Colonic mucosa (tissue), 4 donors: ENCODE measurements at regions of chr17 and their contacts with region 1.

Region 1: GRCh38 chr17:82030470-82031302 is 792 bp upstream of the RAC3 start:
- DNase-seq: peak; percentile 90
- H3K4me3 ChIP-seq: peak overlapping the region; percentile 47
- H3K27ac ChIP-seq: peak overlapping the region; percentile 75
- H3K4me1 ChIP-seq: peaks cover 10% of the 10 kb centered on the region
- H3K27me3 ChIP-seq: no peaks in the 10 kb centered on the region
- CTCF ChIP-seq: peak; percentile 96

Region 2: DNA sequence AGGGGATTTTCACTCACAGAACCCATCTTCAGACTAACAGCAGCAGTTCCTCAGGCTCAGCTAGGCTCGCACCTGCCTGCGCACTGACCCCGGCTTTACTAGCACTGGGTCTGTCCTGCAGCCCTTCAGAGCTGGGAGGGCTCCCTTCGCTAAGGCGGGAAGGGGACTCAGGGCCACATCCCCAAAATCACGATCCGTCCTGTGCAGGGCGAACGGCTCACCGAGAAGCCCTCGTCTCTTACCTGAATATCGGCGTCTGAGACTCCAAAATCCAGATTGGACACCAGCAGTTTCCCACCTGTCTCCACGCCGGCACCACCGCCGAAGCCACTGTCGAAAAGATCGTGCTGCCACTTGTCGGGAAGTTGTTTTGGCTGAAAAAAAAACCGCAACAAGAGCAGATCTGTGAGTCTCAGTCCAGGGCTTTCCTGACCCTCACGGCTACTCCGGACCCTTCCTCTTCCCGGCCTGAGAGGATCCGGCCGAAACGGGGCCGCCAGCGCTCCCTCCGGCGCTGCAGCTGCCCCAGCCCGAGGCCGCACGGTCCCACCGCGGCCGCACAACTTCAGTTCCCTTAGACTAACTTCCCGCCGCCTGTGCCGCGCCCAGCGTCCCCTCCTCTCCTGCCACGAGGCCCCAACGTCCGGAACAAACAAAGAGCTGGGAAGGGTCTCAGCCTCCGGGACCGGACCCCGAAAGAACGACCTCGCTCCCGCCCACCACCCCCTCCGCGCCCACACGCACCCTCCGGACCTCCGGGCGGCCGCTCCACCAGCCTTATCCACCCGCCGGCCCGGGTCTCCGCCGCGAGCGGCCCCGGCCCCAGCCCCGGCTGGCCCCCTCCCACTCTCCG is 140.0 kb before region 1 on chr17:
- intact Hi-C with region 1: no loop called
- DNase-seq: no peak
- H3K4me3 ChIP-seq: peak overlapping the region; percentile 94
- H3K27ac ChIP-seq: peak overlapping the region; percentile 57
- H3K4me1 ChIP-seq: peaks cover 5% of the 10 kb centered on the region
- H3K27me3 ChIP-seq: no peaks in the 10 kb centered on the region
- CTCF ChIP-seq: no peak

Region 3: DNA sequence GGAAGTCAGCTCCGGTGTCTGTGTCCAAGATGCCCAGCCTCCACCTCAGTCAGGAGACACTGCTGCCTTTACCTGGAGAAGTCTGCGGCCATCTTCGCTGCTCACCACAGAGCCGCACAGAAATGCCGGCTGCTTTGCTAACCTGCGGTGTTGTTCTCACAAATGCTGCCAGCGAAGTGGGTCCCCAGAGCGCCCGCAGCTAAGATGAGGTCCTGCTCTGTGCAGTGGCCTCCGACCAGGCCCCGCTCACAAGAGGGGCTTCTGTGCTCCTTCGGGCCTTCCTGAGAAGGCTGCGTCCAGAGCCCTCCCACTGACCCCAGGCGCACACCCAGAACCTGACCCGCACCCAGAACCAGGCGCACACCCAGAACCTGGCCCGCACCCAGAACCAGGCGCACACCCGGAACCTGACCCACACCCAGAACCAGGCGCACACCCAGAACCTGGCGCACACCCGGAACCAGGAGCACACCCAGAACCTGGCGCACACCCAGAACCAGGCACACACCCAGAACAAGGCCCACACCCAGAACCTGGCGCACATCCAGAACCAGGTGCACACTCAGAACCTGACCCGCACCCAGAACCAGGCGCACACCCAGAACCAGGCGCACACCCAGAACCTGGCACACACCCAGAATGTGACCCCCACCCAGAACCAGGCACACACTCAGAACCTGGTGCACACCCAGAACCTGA is 118.9 kb after region 1 on chr17:
- intact Hi-C with region 1: loop called (anchors 2 kb)
- DNase-seq: no peak
- H3K4me3 ChIP-seq: no peak overlapping the region
- H3K27ac ChIP-seq: no peak overlapping the region
- H3K4me1 ChIP-seq: no peaks in the 10 kb centered on the region
- H3K27me3 ChIP-seq: no peaks in the 10 kb centered on the region
- CTCF ChIP-seq: no peak

Region 4: DNA sequence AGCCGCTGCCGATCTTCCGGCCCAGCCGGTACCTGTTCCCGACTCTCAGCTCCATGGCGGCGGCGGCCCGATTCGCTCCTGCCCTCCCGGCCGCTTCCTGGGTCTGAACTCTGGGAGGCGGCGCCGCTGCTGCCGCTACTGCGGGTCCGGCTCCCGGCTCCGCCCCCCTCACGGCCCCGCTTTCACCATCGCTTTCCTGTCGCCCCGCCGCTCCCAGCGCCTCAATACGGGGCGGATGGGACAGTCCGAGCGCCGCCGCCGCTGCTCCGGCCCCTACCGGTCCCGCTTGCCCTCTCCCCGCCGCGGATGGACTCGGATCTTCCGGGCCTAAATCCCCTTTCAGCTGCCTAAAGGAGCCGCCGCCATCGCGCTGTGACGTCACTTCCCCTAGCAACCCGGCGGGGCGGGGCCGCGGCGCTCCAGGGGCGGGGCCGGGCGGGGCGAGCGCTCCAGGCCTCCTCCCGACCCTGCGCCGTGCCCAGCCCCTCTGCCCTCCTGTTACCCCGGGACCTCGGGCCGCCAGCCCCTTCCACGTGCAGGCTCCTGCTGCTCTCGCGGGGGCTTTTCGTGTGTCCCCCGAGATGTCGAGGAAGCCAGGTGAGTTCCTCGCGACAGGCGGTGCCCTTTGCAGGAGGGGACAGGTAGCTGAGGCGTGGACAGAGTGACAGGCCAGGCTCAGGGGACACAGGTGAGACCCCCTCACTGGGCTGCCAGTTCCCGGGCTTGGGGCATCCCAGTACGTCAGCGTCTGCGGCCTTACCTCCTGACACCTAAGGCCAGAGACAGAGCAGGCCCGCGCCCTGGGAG is 242.8 kb after region 1 on chr17 and contains the start of gene CSNK1D:
- intact Hi-C with region 1: no loop called
- DNase-seq: peak; percentile 95
- H3K4me3 ChIP-seq: peak within 1 kb of the TSS; percentile 96
- H3K27ac ChIP-seq: peak within 1 kb of the TSS; percentile 96
- H3K4me1 ChIP-seq: peaks cover 32% of the 10 kb centered on the region
- H3K27me3 ChIP-seq: no peaks in the 10 kb centered on the region
- CTCF ChIP-seq: no peak
- total RNA-seq, gene CSNK1D: 136 to 138 TPM